ENCODE measurements at regions of chr6 and their contacts with region 1.

Region 1: DNA sequence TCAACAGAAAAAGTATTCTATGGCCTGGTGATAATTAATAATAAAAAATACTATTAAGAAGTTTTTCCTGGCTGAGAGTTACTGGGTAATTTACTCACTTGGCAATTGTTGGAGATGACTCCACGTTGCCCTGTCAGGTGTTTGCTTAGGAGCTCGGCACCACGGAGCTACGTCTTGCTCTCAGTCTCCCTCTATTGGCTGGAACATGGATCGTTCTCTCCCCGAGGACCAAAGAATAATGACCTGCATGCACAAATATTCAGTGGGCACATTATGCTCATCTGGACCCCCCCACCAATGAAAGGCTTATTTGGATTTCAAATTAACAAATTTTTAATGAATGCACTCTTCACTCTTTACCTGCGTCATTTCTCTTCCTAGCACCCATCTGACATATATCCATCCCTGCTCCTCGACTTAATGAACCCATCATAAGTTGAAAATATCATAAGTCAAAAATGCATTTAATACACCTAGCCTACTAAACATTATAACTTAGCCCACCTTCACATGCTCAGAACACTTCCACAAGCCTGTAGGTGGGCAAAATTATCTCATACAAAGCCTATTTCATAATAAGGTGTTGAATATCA is 71.0 kb upstream of the CD83 start:
- DNase-seq: peak; percentile 57
- H3K4me3 ChIP-seq: no peak overlapping the region
- H3K27ac ChIP-seq: no peak overlapping the region
- H3K4me1 ChIP-seq: no peaks in the 10 kb centered on the region
- H3K27me3 ChIP-seq: no peaks in the 10 kb centered on the region
- CTCF ChIP-seq: peak; percentile 63 to 79
- POLR2A ChIP-seq: no peak

Region 2: DNA sequence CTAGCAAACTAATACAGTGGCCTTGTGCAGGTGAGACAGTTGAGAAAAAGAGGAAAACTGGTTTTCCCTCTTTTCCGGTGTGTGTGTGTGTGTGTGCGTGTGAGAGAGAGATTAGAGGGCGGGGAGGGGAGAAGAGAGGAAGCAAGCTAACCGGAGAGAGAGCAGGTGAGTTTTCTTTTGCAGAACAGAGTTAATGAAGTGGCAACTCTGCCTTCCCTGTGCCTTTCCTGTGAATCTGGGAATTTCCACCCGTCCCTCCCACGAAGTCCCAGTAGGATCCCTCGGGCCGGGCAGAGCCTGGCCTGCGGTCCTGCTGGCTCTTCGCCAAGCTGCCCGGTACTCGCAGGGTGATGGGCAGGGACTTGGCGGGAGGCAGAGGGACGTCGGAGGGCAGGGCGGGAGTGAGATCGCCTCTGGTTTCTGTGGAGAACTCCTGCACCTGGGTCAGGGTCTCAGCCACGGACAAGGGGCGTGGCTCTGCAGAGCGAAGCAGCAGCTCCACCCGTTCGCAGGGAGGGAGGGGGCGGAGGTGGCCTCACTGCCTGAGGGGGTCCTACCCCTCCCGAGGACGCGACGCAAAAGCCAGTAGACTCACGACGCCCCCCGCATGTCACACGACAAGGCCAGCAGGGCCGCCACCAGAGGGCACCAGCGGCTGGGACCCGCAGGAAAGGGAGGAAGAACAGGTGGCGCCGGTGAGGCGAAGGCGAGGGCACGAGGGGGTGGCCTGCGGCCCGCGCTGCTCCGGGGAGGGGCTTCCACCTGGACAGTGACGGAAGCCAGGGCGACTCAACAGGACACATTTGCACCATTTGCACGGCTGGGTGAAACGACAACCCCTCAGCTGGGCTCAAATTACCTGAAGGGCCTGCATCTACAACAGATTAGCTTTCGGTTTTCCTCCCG is 173.0 kb before region 1 on chr6:
- CTCF ChIA-PET with region 1: interaction called, 10 read pairs
- POLR2A ChIA-PET with region 1: no interaction called
- dilution Hi-C with region 1: no loop called
- intact Hi-C with region 1: no loop called
- DNase-seq: peak; percentile 18
- H3K4me3 ChIP-seq: peak overlapping the region in 1 of 3 experiments; percentile 17
- H3K27ac ChIP-seq: no peak overlapping the region
- H3K4me1 ChIP-seq: no peaks in the 10 kb centered on the region
- H3K27me3 ChIP-seq: peaks cover 2 to 4% of the 10 kb centered on the region in 2 experiments
- CTCF ChIP-seq: peak; percentile 67 to 79
- POLR2A ChIP-seq: no peak

Region 3: GRCh38 chr6:13916230-13916944 is 130.2 kb before region 1 on chr6:
- CTCF ChIA-PET with region 1: interaction called, 203 read pairs
- POLR2A ChIA-PET with region 1: no interaction called
- dilution Hi-C with region 1: no loop called
- intact Hi-C with region 1: no loop called
- DNase-seq: no peak
- H3K4me3 ChIP-seq: no peak overlapping the region
- H3K27ac ChIP-seq: no peak overlapping the region
- H3K4me1 ChIP-seq: peaks cover 6% of the 10 kb centered on the region
- H3K27me3 ChIP-seq: peaks cover 8 to 11% of the 10 kb centered on the region in 2 experiments
- CTCF ChIP-seq: no peak
- POLR2A ChIP-seq: no peak

Region 4: DNA sequence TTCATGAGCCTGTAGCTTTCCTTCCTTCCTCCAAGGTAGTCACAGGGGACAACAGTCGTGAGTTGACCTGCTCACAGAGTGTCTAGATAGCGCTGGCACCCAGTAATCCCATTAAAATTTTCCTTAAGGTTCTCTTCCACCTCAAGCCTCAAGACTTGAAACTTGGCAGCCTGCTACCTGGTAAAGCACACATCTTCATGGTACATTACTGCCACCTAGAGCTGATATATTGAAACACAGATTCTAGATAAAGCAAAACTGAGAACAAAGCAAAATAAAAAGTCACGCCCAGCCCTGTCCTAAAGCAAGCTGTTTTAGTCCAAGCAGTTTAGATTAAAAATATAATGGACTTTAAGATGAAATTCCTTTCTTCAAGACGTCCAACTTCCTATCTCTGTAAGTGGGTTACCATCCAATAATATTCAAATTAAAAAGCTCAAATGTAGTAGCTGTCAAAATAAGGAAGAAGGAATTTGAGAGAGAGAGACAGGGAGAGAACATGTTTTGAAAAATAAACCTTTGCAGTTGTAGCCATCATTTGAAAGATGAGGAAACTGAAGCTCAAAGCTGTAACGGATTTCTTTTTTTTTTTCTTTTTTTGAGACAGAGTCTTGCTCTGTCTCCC is 20.3 kb after region 1 on chr6:
- CTCF ChIA-PET with region 1: interaction called, 79 read pairs
- POLR2A ChIA-PET with region 1: no interaction called
- dilution Hi-C with region 1: no loop called
- intact Hi-C with region 1: loop called (anchors 2 kb)
- DNase-seq: peak; percentile 61
- H3K4me3 ChIP-seq: no peak overlapping the region
- H3K27ac ChIP-seq: no peak overlapping the region
- H3K4me1 ChIP-seq: no peaks in the 10 kb centered on the region
- H3K27me3 ChIP-seq: peaks cover 5 to 18% of the 10 kb centered on the region in 2 experiments
- CTCF ChIP-seq: peak; percentile 47 to 52
- POLR2A ChIP-seq: no peak

Measured in endothelial cell of umbilical vein (primary cell).